ENCODE measurements at regions of chr14 and their contacts with region 1.

Region 1: GRCh38 chr14:92039719-92040430 is at the start of gene TRIP11:
- DNase-seq: peak; percentile 94 to 97 (median 95)
- H3K4me3 ChIP-seq: peak within 1 kb of the TSS; percentile 51 to 71
- H3K4me3 Mint-ChIP-seq: peak within 1 kb of the TSS; percentile 93 to 100 (median 96)
- H3K27ac ChIP-seq: peak within 1 kb of the TSS; percentile 89
- H3K27ac Mint-ChIP-seq: peak within 1 kb of the TSS; percentile 97 to 99 (median 99)
- H3K4me1 ChIP-seq: peaks cover 43% of the 10 kb centered on the region
- H3K4me1 Mint-ChIP-seq: peaks cover 31 to 59% (median 43%) of the 10 kb centered on the region in 4 donors
- H3K27me3 ChIP-seq: no peaks in the 10 kb centered on the region
- H3K27me3 Mint-ChIP-seq: no peaks in the 10 kb centered on the region
- total RNA-seq, gene TRIP11: 68.0 to 68.7 TPM

Region 2: DNA sequence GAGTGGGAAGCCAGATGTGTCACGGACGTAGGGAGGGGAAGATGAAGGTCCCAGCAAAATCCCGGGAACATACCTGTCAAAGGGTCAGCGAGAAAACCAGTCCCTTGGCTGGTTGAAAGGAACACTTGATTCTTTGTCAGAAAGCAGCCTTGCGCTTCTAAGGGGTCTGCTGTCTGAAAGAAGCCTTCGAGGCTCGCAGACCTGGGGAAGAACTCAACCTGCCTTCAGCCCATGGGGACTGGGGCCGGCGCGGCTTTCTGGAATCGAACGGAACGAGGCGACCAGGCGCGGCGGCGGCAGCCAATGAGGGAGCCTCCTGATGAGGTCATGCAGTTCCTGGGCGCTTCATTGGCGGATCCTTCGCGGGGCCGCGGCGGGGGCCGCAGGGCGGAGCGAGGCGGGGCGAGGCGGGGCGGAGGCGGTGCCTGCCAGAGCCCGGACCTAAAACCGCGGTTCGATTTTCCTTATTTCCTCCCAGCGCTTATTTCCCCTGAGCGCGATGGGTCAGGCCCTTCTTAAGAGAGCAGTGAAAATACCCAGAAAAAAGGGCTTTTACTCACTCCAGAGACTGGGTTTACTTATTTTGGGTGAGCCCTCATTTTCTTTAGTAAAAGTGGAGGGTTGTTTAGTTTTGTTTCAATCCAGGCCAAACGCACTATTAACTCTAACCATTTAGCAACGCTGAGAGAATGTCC is 1211.8 kb before region 1 on chr14:
- CTCF ChIA-PET with region 1: no interaction called
- POLR2A ChIA-PET with region 1: no interaction called
- intact Hi-C with region 1: loop called (anchors 5 kb)
- DNase-seq: peak; percentile 86 to 91 (median 88)
- H3K4me3 ChIP-seq: peak overlapping the region; percentile 55 to 71
- H3K4me3 Mint-ChIP-seq: peak overlapping the region; percentile 79 to 92 (median 84)
- H3K27ac ChIP-seq: peak overlapping the region; percentile 57
- H3K27ac Mint-ChIP-seq: peak overlapping the region; percentile 82 to 96 (median 94)
- H3K4me1 ChIP-seq: peaks cover 20% of the 10 kb centered on the region
- H3K4me1 Mint-ChIP-seq: peaks cover 8 to 28% (median 18%) of the 10 kb centered on the region in 4 donors
- H3K27me3 ChIP-seq: no peaks in the 10 kb centered on the region
- H3K27me3 Mint-ChIP-seq: no peaks in the 10 kb centered on the region

Region 3: DNA sequence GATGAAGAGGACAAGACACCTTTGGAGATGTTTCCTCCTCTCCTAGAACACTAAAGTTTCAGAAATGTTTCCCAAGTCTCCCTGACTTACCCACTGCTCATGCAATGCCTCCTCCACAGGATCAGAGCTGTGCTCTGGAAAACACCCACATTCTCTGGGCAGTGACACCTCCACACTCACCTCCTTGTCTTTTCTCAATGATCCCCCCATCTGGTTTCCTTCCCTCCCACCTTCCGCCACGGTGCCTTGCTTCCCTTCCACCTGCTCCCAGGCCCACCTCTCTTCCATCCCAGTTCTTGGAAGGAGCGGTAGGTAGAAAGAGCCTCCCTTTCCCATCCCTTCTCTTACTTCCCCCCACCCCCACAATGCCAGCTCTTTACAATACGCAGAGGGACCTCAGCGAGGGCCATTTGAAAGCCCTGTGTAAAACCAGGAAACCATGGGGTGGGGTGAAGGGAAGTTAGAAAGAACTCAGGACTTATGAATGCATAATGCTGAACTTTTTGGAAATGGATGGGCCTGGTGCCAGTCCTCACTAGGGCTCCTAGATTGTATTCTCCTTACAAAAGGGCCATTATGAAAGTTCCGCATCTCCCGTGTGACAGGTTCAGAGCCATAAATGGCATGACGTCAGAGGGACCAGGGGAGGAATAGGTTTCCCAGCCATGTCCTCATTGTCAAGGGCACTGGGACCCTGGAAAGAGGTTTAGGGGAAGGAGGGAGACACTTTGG is 105.2 kb before region 1 on chr14:
- CTCF ChIA-PET with region 1: no interaction called
- POLR2A ChIA-PET with region 1: no interaction called
- intact Hi-C with region 1: no loop called
- DNase-seq: no peak
- H3K4me3 ChIP-seq: no peak overlapping the region
- H3K4me3 Mint-ChIP-seq: no peak overlapping the region
- H3K27ac ChIP-seq: no peak overlapping the region
- H3K27ac Mint-ChIP-seq: no peak overlapping the region
- H3K4me1 ChIP-seq: no peaks in the 10 kb centered on the region
- H3K4me1 Mint-ChIP-seq: peaks cover 0 to 1% (median 0%) of the 10 kb centered on the region in 4 donors
- H3K27me3 ChIP-seq: no peaks in the 10 kb centered on the region
- H3K27me3 Mint-ChIP-seq: peaks cover 2% of the 10 kb centered on the region in 2 donors

Region 4: GRCh38 chr14:91987192-91987591 is 52.7 kb before region 1 on chr14:
- CTCF ChIA-PET with region 1: no interaction called
- POLR2A ChIA-PET with region 1: no interaction called
- intact Hi-C with region 1: no loop called
- DNase-seq: no peak
- H3K4me3 ChIP-seq: no peak overlapping the region
- H3K4me3 Mint-ChIP-seq: no peak overlapping the region
- H3K27ac ChIP-seq: no peak overlapping the region
- H3K27ac Mint-ChIP-seq: peak overlapping the region in 3 of 7 donors; percentile 14 to 37 (median 26)
- H3K4me1 ChIP-seq: no peaks in the 10 kb centered on the region
- H3K4me1 Mint-ChIP-seq: peaks cover 0 to 14% (median 10%) of the 10 kb centered on the region in 4 donors
- H3K27me3 ChIP-seq: no peaks in the 10 kb centered on the region
- H3K27me3 Mint-ChIP-seq: no peaks in the 10 kb centered on the region

Region 5: DNA sequence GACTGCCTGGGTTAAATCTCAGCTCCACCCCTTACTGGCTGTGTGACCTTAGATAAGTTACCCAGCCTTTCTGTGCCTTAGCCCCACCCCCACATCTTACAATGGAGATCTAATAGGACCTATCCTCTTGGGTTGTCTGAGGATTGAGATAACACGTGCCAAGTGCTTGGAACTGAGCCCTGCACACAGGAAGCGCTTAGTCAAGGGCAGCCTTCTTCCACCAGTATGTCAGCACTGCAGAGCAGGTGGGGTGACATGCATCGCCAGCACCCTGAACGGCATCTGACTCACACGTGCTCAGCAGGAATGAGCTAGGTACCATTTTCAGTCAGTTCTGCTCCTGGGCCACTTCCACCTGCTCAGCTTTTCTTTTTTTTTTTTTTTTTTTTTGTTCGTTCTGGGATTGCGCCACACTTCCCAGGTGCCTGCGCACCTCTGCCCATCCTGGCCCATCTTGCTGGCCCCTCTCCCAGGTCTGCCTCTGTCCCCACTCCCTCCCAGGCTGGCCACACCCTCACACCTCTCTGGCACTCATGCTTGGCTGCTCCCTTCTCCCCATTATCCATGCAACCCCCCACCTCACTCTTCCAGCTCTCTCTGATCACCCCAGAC is 689.0 kb after region 1 on chr14:
- CTCF ChIA-PET with region 1: no interaction called
- POLR2A ChIA-PET with region 1: no interaction called
- intact Hi-C with region 1: no loop called
- DNase-seq: no peak
- H3K4me3 ChIP-seq: no peak overlapping the region
- H3K4me3 Mint-ChIP-seq: peak overlapping the region in 1 of 8 donors; percentile 47
- H3K27ac ChIP-seq: no peak overlapping the region
- H3K27ac Mint-ChIP-seq: no peak overlapping the region
- H3K4me1 ChIP-seq: no peaks in the 10 kb centered on the region
- H3K4me1 Mint-ChIP-seq: peaks cover 0 to 6% (median under 1%) of the 10 kb centered on the region in 4 donors
- H3K27me3 ChIP-seq: no peaks in the 10 kb centered on the region
- H3K27me3 Mint-ChIP-seq: peaks cover 2 to 9% of the 10 kb centered on the region in 2 donors

Measured in CD4-positive, alpha-beta memory T cell (primary cell).